CD4-positive, alpha-beta T cell (primary cell): ENCODE measurements at regions of chr14 and their contacts with region 1.

Region 1: GRCh38 chr14:92793709-92794546 is at the start of gene GOLGA5:
- DNase-seq: peak; percentile 95 to 100 (median 98)
- ATAC-seq: peak; percentile 90
- H3K4me3 ChIP-seq: peak within 1 kb of the TSS; percentile 81
- H3K4me3 Mint-ChIP-seq: peak within 1 kb of the TSS; percentile 95
- H3K27ac ChIP-seq: peak within 1 kb of the TSS; percentile 59 to 77
- H3K27ac Mint-ChIP-seq: peak within 1 kb of the TSS; percentile 80
- H3K4me1 ChIP-seq: peaks cover 23% of the 10 kb centered on the region
- H3K4me1 Mint-ChIP-seq: peaks cover 45% of the 10 kb centered on the region
- H3K27me3 ChIP-seq: no peaks in the 10 kb centered on the region
- H3K27me3 Mint-ChIP-seq: no peaks in the 10 kb centered on the region
- CTCF ChIP-seq: no peak
- total RNA-seq, gene GOLGA5: 5.2 to 6.8 TPM

Region 2: GRCh38 chr14:91836119-91836881 is 957.6 kb before region 1 on chr14:
- CTCF ChIA-PET with region 1: no interaction called
- POLR2A ChIA-PET with region 1: no interaction called
- intact Hi-C with region 1: loop called in 1 of 2 experiments (anchors 10 kb)
- DNase-seq: peak; percentile 78 to 97 (median 90)
- ATAC-seq: peak; percentile 95
- H3K4me3 ChIP-seq: peak overlapping the region; percentile 63
- H3K4me3 Mint-ChIP-seq: peak overlapping the region; percentile 93
- H3K27ac ChIP-seq: peak overlapping the region; percentile 43 to 59
- H3K27ac Mint-ChIP-seq: peak overlapping the region; percentile 90
- H3K4me1 ChIP-seq: peaks cover 33% of the 10 kb centered on the region
- H3K4me1 Mint-ChIP-seq: peaks cover 83% of the 10 kb centered on the region
- H3K27me3 ChIP-seq: no peaks in the 10 kb centered on the region
- H3K27me3 Mint-ChIP-seq: no peaks in the 10 kb centered on the region
- CTCF ChIP-seq: no peak

Region 3: DNA sequence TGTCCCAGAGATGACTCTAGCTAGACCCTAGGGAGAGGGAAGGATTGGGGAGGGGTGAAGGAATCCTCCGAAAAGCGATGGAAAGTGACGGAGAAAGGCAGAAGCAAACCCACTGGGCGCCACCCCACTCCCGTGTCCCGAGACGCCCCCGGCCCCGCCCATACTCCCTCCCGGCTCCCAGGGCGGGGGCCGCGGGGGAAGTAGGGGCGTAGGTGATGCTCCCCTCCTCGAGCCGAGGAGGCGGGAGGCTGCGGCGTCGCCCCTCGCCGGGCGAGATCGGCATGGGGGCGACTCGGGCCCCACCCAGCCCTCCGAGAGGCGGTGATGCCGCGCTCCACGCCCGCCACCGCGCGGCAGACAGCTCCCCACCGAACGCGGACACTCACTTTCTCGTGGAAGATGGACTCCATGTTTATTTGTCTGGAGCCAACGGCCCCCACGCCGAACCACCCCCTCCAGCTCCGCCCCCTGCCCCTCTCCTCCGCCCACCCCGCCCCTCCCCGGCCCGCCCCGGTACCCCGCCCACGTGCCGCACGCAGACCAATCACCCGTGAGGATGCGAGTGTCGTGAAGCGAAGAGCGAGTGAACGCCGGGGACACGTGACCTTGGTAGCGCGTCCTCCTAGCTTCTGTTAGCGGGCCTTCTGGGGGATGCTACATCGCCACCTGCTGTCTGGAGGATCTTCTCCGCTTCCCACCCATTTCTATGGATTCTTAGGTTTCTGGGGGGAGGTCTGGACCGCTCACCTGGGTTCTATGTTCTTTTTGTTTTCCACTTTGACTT is 687.6 kb before region 1 on chr14 and contains the start of gene ATXN3:
- CTCF ChIA-PET with region 1: interaction called, 4 read pairs
- POLR2A ChIA-PET with region 1: interaction called, 3 read pairs
- intact Hi-C with region 1: loop called in 1 of 2 experiments (anchors 5 kb)
- DNase-seq: peak; percentile 89 to 99 (median 94)
- ATAC-seq: peak; percentile 93
- H3K4me3 ChIP-seq: peak within 1 kb of the TSS; percentile 66
- H3K4me3 Mint-ChIP-seq: peak within 1 kb of the TSS; percentile 95
- H3K27ac ChIP-seq: peak within 1 kb of the TSS; percentile 81 to 84
- H3K27ac Mint-ChIP-seq: peak within 1 kb of the TSS; percentile 84
- H3K4me1 ChIP-seq: peaks cover 45% of the 10 kb centered on the region
- H3K4me1 Mint-ChIP-seq: peaks cover 73% of the 10 kb centered on the region
- H3K27me3 ChIP-seq: no peaks in the 10 kb centered on the region
- H3K27me3 Mint-ChIP-seq: no peaks in the 10 kb centered on the region
- CTCF ChIP-seq: peak; percentile 84
- total RNA-seq, gene ATXN3: 21.5 to 22.1 TPM

Region 4: GRCh38 chr14:92585981-92586937 is 207.7 kb before region 1 on chr14:
- CTCF ChIA-PET with region 1: no interaction called
- POLR2A ChIA-PET with region 1: no interaction called
- intact Hi-C with region 1: no loop called
- DNase-seq: peak in 5 of 14 experiments; percentile 29 to 89 (median 74)
- ATAC-seq: peak; percentile 84
- H3K4me3 ChIP-seq: peak overlapping the region; percentile 8
- H3K4me3 Mint-ChIP-seq: peak overlapping the region; percentile 73
- H3K27ac ChIP-seq: peak overlapping the region; percentile 58 to 84
- H3K27ac Mint-ChIP-seq: peak overlapping the region; percentile 90
- H3K4me1 ChIP-seq: peaks cover 89% of the 10 kb centered on the region
- H3K4me1 Mint-ChIP-seq: peaks cover 96% of the 10 kb centered on the region
- H3K27me3 ChIP-seq: no peaks in the 10 kb centered on the region
- H3K27me3 Mint-ChIP-seq: no peaks in the 10 kb centered on the region
- CTCF ChIP-seq: no peak

Region 5: GRCh38 chr14:92748259-92749016 is 45.5 kb before region 1 on chr14 and contains the start of gene LGMN:
- CTCF ChIA-PET with region 1: no interaction called
- POLR2A ChIA-PET with region 1: interaction called, 10 read pairs
- intact Hi-C with region 1: loop called (anchors 1 to 2 kb)
- DNase-seq: peak; percentile 73 to 91 (median 84)
- ATAC-seq: peak; percentile 98
- H3K4me3 ChIP-seq: peak within 1 kb of the TSS; percentile 70
- H3K4me3 Mint-ChIP-seq: peak within 1 kb of the TSS; percentile 93
- H3K27ac ChIP-seq: peak within 1 kb of the TSS in 1 of 2 donors; percentile 35
- H3K27ac Mint-ChIP-seq: peak within 1 kb of the TSS; percentile 73
- H3K4me1 ChIP-seq: peaks cover 26% of the 10 kb centered on the region
- H3K4me1 Mint-ChIP-seq: peaks cover 48% of the 10 kb centered on the region
- H3K27me3 ChIP-seq: no peaks in the 10 kb centered on the region
- H3K27me3 Mint-ChIP-seq: peaks cover 7% of the 10 kb centered on the region
- CTCF ChIP-seq: no peak
- total RNA-seq, gene LGMN: 4.5 to 4.9 TPM

Region 6: DNA sequence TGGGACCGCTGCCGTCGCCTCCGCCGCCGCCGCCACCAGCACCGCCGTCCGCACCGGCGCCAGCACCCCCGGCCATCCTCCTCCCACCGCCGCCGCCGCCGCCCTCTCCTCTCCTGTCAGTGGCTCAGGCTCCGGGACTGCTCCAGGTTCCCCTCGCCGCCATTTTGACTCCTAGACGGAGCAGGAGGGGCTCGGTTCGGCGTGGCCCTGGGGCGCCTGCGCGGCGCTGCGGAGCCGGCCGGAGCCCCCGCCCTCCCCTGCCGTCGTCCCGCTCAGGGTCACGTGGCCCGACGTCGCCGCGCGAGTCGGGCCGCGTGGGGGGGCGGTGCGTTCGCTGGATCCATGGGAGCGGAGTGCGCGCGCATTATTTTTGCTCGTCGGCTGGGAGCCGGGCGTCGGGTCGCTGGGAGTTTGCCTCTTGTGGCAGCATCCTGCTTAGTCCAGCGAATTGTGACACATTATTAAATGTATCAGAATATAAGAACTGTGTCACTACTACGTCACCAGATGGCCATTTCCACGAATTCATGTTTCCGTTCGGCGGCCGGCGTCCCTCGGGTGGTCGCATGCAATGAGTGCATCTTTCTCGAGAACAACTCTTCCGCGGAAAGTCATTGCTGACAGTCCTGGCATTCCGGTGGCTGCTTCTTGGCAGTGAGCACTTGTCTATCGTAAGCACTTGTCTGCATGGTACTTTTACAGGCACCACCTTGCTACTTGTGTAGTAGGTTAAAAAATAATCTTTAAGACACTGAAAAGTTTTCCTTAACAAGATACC is 539.1 kb after region 1 on chr14 and contains the start of gene BTBD7:
- CTCF ChIA-PET with region 1: no interaction called
- POLR2A ChIA-PET with region 1: no interaction called
- intact Hi-C with region 1: loop called in 1 of 2 experiments (anchors 5 kb)
- DNase-seq: peak; percentile 88 to 99 (median 92)
- ATAC-seq: peak; percentile 94
- H3K4me3 ChIP-seq: peak within 1 kb of the TSS; percentile 80
- H3K4me3 Mint-ChIP-seq: peak within 1 kb of the TSS; percentile 97
- H3K27ac ChIP-seq: peak within 1 kb of the TSS; percentile 52 to 73
- H3K27ac Mint-ChIP-seq: peak within 1 kb of the TSS; percentile 92
- H3K4me1 ChIP-seq: peaks cover 20% of the 10 kb centered on the region
- H3K4me1 Mint-ChIP-seq: peaks cover 58% of the 10 kb centered on the region
- H3K27me3 ChIP-seq: no peaks in the 10 kb centered on the region
- H3K27me3 Mint-ChIP-seq: no peaks in the 10 kb centered on the region
- CTCF ChIP-seq: no peak
- total RNA-seq, gene BTBD7: 12.5 to 12.6 TPM